ENCODE measurements at regions of chr11 and their contacts with region 1.

Region 1: DNA sequence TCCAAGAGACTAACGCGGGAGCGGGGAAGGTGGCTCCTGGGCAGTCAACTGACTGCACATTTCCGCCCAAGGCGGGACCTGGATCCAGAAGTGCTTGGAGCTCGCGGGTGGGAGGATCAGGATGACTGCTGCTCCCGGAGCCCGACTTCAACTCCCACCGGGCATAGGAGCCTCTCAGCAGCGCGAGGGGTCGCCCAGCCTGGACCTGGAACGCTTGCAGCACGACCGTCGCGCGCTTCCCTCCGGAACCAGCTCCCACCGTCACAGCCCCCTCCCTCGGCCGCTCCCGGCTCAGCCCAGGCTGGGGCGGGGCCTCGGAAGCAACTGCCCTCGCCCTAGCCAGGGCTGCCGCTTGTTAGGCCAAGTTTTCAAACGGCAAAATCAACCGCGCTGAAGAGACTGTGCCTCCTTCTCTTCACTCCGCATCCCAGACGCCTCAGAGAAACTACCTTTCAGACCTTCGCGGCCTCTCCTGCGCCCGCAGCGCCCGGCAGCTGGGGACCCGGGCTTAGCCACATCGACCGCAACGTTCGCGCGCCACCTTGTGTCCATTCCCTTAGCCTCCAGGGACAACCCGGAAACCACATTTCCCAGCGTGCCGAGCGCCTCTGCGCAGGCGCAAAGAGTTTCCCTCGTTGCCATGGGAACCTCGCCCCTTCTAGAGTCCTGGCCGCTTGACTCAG is 14.0 kb downstream of the SSH3 start:
- DNase-seq: peak; percentile 97
- H3K4me3 ChIP-seq: peak overlapping the region; percentile 53 to 80 (median 72)
- H3K27ac ChIP-seq: peak overlapping the region; percentile 85 to 98 (median 90)
- H3K4me1 ChIP-seq: peaks cover 0 to 34% (median 26%) of the 10 kb centered on the region in 4 donors
- H3K27me3 ChIP-seq: no peaks in the 10 kb centered on the region
- CTCF ChIP-seq: peak; percentile 94 to 100 (median 98)
- EP300 ChIP-seq: no peak
- POLR2A ChIP-seq: peak in 1 of 2 donors; percentile 83

Region 2: DNA sequence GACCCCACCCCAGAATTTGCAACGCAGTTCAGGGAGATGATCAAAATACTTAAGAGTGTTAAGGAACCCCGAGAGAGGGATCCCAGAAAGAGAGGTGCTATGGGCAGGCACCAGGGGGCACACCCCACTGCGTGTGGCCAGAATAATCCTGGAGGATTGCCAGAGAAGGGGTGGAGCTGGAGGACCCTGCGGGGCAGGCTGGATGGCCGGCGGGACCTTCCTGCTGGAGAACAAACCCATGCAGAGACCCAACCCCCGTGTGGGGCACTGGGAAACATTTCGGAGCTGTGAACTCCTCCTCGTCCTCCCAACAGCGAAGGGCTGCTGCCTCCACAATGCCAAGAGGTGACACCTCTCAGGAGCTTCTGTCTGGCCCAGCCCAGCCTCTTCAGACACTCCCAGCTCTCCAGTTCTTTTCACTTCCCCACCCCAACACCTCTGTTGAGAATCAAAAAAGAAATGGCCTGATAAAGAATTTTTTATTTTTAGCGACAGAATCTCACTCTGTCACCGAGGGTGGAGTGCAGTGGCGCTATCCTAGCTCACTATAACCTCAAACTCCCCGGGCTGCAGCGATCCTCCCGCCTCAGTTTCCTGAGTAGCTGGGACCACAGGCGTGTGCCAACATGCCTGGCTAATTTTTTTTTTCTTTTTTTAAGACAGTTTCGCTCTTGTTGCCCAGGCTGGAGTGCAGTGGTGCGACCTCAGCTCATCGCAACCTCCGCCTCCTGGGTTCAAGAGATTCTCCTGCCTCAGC is 235.1 kb before region 1 on chr11:
- intact Hi-C with region 1: loop called (anchors 5 kb)
- DNase-seq: no peak
- H3K4me3 ChIP-seq: no peak overlapping the region
- H3K27ac ChIP-seq: no peak overlapping the region
- H3K4me1 ChIP-seq: peaks cover 0 to 11% (median 9%) of the 10 kb centered on the region in 4 donors
- H3K27me3 ChIP-seq: peaks cover 0 to 7% (median 0%) of the 10 kb centered on the region in 3 donors
- CTCF ChIP-seq: no peak
- EP300 ChIP-seq: no peak
- POLR2A ChIP-seq: no peak

Region 3: DNA sequence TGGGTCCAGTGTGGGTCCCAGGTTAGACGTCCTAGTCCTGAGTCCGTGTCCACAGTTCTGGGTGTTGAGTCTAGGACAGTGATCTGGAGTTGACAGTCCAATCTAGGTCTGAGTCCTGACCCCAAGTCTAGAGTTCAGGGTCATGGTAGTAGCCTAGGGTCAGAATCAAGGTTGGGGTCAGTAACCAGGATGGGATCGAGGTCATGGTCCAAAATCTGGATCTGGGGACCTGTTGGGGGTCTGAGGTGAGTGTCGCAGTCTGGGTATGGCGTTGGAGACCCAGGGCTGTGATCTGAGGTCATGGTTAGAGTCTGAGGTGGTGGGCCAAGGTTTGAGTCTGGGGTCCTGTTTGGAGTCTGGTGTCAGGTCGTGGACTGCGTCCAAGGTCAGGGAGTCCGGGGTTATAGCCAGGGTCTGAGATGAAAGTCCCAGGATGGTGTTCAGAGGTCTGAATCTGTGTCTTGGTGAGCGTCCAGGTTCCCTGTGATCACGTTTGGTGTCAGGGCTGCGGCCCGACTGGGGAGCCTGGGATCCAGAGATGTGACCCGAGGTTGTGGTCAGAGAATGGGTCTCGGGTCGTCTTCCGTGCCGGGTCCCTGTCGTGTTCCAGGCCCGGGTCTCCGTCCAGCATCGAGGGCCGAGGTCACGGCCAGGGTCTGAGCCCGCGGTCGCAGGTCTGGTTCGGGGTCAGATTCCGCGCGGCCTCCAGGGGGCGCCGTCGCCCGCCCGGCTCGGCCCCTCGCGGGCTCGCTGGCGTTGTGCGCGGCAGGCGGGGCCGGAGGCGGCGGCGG is 51.5 kb before region 1 on chr11:
- intact Hi-C with region 1: loop called (anchors 1 kb)
- DNase-seq: peak; percentile 88
- H3K4me3 ChIP-seq: peak overlapping the region in 3 of 4 donors; percentile 5 to 25 (median 24)
- H3K27ac ChIP-seq: peak overlapping the region; percentile 72 to 80 (median 76)
- H3K4me1 ChIP-seq: peaks cover 0 to 71% (median 67%) of the 10 kb centered on the region in 4 donors
- H3K27me3 ChIP-seq: no peaks in the 10 kb centered on the region
- CTCF ChIP-seq: peak; percentile 60 to 70 (median 64)
- EP300 ChIP-seq: no peak
- POLR2A ChIP-seq: no peak

Region 4: DNA sequence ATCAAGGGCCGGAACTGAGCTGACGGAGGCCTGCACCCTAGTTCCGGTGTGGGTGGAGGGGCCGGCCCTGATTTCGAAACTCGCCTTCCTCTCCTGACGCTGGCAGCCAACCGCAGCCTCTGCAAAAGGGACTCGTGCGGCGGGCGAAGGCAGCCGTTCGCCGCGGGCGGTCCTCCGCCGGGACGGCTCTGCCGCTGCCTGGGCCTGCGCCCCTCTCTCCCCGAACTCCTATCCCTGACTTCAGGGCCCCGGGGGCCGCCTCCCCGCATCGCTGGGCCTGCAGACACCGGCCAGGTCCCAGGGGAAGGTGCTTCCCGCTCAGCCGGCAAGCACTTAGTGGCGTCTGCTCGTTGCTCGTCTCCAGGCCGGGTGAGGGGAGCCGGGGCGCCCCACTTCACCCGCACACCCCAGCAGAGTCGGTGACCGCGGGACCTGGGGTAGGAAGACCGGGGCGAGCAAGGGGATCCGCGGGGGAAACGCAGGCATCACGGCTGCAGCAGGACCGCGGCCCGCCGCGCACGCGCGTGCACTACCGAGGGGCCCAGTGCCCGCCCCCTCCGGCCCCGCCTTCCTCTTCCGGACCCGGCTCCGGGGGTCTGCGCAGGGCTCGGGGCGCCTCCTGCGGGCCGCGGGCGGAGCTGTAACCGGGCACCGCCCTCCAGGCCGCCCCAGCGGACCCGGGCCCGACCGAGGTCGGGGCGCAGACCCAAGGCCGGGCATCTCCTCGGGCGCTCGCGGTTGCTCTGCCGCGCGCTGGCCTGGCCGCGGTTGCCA is 28.7 kb before region 1 on chr11:
- intact Hi-C with region 1: loop called (anchors 2 kb)
- DNase-seq: peak; percentile 96
- H3K4me3 ChIP-seq: peak overlapping the region; percentile 81 to 91 (median 84)
- H3K27ac ChIP-seq: peak overlapping the region; percentile 95 to 97 (median 96)
- H3K4me1 ChIP-seq: peaks cover 0 to 61% (median 39%) of the 10 kb centered on the region in 4 donors
- H3K27me3 ChIP-seq: no peaks in the 10 kb centered on the region
- CTCF ChIP-seq: peak in 1 of 4 experiments; percentile 33
- EP300 ChIP-seq: no peak
- POLR2A ChIP-seq: peak; percentile 38 to 58

Measured in sigmoid colon (tissue), 7 donors.